ENCODE measurements at regions of chr20 and their contacts with region 1.

Region 1: DNA sequence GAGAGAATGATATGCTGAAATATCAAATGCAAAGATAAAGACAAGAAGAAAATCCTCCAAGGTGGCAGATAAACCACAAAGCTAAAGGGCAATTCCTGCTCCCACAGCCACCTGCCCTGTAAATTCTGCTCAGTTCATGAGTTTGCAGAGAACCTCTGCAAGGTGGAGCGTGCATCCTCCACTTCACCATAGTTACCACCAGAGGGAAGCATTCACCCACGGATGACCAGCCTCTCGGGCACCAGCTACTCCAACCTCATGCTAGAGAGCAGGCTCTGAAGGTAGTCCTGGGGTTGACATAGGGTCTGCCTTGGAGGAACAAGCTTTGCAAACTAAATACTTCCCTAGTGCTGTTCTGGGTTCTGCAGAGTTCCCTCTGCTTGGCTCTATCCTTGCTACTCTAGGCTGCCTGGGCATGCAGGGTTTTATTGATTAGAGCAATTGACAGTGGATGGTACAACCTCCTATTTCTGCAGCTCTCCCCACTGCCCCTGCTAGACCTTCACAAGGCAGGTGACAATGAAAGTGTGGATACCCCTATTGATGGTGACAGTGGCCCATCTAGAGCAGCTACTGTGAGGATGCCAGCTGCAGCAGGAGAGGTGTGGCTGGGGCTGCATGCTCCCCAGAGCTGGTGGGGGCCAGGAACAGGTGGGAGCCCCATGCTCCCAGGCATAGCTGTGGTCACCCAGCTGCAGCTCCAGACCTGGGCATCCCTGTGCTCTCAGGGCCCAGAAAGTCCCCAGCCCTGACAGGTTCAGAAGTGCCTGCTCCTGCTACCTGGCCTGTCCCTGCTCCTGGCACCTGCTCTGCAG is 51.1 kb downstream of the GGTLC1 start:
- DNase-seq: peak; percentile 17
- ATAC-seq: peak; percentile 96
- H3K4me3 ChIP-seq: no peak overlapping the region
- H3K27ac ChIP-seq: no peak overlapping the region
- H3K4me1 ChIP-seq: no peaks in the 10 kb centered on the region
- H3K27me3 ChIP-seq: no peaks in the 10 kb centered on the region; the same call in 1 of the 2 replicates
- CTCF ChIP-seq: peak; percentile 69

Region 2: DNA sequence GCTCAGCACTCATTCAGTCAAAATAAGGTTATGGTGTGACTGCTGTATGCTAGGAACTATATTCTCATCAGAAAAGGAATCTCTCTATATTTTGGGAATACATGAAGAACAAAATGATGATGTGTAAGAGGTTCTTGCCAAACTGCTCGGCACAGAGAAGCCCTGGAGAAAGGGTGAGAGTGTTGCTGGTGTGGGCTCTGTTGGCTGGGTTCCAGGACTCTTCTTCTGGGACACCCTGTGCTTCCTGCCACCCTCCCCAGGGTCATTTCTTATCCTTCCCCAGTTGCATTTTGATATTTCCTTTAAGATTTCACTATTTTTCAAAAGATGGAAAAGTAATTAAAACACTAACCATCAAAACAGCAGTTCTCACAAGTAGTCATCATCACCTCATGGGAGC is 215.5 kb before region 1 on chr20:
- CTCF ChIA-PET with region 1: no interaction called
- POLR2A ChIA-PET with region 1: no interaction called
- in situ Hi-C with region 1: no loop called
- intact Hi-C with region 1: loop called (anchors 5 kb)
- DNase-seq: no peak
- ATAC-seq: no peak
- H3K4me3 ChIP-seq: no peak overlapping the region
- H3K27ac ChIP-seq: no peak overlapping the region
- H3K4me1 ChIP-seq: no peaks in the 10 kb centered on the region
- H3K27me3 ChIP-seq: no peaks in the 10 kb centered on the region
- CTCF ChIP-seq: no peak